ENCODE measurements at regions of chr11 and their contacts with region 1.

Region 1: GRCh38 chr11:121572571-121573059 is 119.8 kb upstream of the SORL1-AS1 start:
- DNase-seq: no peak
- ATAC-seq: peak in 1 of 2 donors; percentile 5

Region 2: DNA sequence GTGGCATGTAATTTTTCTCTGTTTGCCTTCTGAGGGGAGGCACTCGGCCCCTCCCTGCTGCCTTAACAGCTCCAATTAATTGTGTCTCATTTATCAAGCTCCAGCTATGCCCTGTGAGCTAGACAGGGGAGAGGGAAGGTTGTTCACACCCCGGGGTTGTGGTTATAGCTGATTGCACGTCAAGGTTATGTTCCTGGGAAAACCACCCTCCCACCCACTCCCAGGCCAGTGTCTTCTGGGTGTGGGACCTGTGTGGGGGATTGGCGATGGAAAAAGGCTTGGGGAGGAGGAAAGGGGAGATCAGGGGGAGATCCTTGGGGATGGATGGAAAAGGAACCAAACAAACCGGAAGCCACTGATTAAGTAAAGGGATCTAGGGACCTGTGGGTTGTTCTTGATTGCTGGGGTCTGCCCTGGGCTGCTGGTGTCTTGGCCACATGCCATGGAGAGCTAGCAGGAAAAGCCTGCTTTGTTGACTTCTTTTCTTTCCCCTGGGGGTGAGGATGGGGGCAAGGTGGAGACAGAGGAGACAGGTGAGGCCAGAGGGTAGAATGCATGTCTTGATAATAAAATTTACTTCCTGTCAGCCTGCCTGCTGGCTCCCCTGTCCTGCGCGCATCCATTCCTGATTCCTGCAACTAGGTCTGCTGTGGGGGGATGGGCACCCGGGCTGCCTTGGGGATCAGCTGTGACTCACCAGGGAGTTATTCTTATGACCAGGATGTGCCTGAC is 106.4 kb before region 1 on chr11:
- intact Hi-C with region 1: loop called in 1 of 2 experiments (anchors 5 kb)
- DNase-seq: peak; percentile 93
- ATAC-seq: peak; percentile 88

Measured in left cardiac atrium (tissue), 4 donors.